ENCODE measurements at regions of chr4 and their contacts with region 1.

Region 1: DNA sequence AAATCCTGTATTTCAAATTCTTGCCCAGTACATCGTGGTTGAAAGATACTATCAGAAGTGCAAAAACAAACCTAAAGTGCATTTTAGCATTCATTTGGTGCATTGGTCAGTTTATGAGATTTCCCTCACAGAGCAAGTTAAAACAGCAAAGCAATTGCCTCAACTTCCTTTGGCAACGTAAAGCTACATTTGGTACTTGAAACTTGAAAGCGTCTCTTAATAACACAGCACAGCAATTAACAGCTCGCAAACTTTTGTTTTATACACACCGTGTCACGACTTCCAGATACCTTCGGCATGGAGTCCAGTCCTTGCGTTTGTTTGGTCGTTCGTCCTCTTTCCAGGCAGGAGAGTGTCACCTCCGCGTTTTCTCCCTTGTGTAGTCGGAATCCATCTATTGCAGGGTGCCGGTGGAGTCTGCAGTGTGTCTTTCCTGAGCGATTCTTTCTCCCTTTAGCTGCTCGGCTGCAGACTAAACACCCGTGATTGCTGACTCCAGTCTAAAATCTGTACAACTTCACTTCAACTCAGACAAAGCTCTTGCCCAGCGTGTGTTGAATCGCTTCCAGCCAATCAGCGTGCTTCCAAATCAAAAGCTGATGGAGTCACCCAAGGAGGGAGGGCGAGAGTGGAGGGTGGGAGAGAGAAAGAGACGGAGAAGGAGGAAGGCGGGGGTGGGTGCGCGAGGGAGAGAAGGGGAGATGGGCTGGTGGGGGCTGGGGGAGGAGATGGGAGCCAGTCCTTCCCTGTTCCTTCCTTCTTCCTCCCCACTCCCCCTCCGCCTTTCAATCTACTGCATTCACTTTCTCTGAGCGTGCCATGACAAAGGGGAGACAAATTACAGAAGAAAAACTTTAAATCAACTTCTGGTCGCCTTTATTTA is at the start of gene PCDH18:
- DNase-seq: peak; percentile 98
- H3K4me3 ChIP-seq: peak within 1 kb of the TSS; percentile 61 to 75 (median 70)
- H3K27ac ChIP-seq: peak within 1 kb of the TSS; percentile 84 to 87 (median 86)
- H3K4me1 ChIP-seq: peaks cover 0 to 33% (median 19%) of the 10 kb centered on the region in 4 donors
- H3K27me3 ChIP-seq: no peaks in the 10 kb centered on the region
- CTCF ChIP-seq: no peak
- EP300 ChIP-seq: no peak
- POLR2A ChIP-seq: no peak
- total RNA-seq, gene PCDH18: 38.3 to 62.1 (median 51.0) TPM

Region 2: GRCh38 chr4:137627739-137628460 is 95.7 kb after region 1 on chr4:
- intact Hi-C with region 1: no loop called
- DNase-seq: no peak
- H3K4me3 ChIP-seq: no peak overlapping the region
- H3K27ac ChIP-seq: no peak overlapping the region
- H3K4me1 ChIP-seq: peaks cover 0 to 3% (median 3%) of the 10 kb centered on the region in 4 donors
- H3K27me3 ChIP-seq: no peaks in the 10 kb centered on the region
- CTCF ChIP-seq: no peak
- EP300 ChIP-seq: no peak
- POLR2A ChIP-seq: no peak

Region 3: GRCh38 chr4:137861682-137862081 is 329.5 kb after region 1 on chr4:
- intact Hi-C with region 1: loop called (anchors 5 kb)
- DNase-seq: no peak
- H3K4me3 ChIP-seq: no peak overlapping the region
- H3K27ac ChIP-seq: no peak overlapping the region
- H3K4me1 ChIP-seq: no peaks in the 10 kb centered on the region
- H3K27me3 ChIP-seq: no peaks in the 10 kb centered on the region
- CTCF ChIP-seq: peak; percentile 56 to 61 (median 58)
- EP300 ChIP-seq: no peak
- POLR2A ChIP-seq: no peak

Measured in esophagus muscularis mucosa (tissue), 4 donors.